ENCODE measurements at regions of chr2 and their contacts with region 1.

Region 1: GRCh38 chr2:42844901-42845821 is 52.8 kb upstream of the HAAO start:
- DNase-seq: peak; percentile 93
- H3K4me3 ChIP-seq: no peak overlapping the region
- H3K27me3 ChIP-seq: no peaks in the 10 kb centered on the region
- CTCF ChIP-seq: no peak

Region 2: DNA sequence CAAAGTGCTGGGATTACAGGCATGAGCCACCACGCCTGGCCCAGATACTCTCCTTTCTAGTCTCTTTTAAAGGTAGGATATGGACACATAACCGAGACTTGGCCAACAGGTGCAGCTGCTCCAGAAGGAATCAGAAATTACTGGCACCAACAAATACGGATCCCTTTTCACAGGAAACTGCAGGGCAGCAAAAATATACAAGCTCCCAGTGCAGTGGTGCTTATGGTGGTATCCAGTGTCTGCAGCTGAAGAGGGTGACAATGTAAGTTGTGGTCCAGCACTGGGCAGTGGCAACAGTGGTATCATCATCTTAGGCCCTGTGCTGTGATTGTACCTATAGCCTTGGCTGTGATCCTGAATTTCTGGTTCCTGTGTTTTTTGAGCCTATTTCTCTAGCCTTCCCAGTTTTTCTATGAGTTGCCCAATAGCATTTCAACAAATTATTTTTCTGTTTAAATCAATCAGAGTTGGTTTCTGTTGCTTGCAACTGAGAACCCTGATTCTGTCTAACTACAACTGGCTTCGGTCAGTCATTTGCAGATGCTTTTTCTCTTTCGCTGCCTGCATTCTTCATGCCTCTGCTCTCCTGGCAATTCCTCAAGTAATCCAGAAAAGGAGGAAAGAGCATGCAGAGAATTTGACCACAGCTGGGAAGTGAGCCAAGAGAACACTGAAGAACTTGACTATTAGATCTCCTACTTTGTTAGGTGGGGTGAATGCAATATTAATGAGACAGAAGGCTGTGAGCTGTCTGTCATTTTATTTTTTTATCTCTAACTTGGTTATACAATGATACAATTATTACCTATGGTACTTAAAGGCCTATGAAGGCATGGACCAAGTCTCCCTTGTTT is 706.8 kb before region 1 on chr2:
- CTCF ChIA-PET with region 1: no interaction called
- POLR2A ChIA-PET with region 1: interaction called, 16 read pairs
- DNase-seq: peak; percentile 84
- H3K4me3 ChIP-seq: no peak overlapping the region
- H3K27me3 ChIP-seq: no peaks in the 10 kb centered on the region
- CTCF ChIP-seq: no peak